Activated CD4-positive, alpha-beta T cell treated with anti-CD3 and anti-CD28 coated beads for 36 hours (primary cell): ENCODE measurements at regions of chr17 and their contacts with region 1.

Region 1: GRCh38 chr17:49707608-49708514 is at the start of gene SLC35B1:
- DNase-seq: peak; percentile 100
- ATAC-seq: peak; percentile 97
- H3K4me3 Mint-ChIP-seq: peak within 1 kb of the TSS; percentile 93
- H3K27ac Mint-ChIP-seq: peak within 1 kb of the TSS; percentile 97
- H3K4me1 Mint-ChIP-seq: peaks cover 39% of the 10 kb centered on the region
- H3K27me3 Mint-ChIP-seq: no peaks in the 10 kb centered on the region
- total RNA-seq, gene SLC35B1: 43.9 to 59.4 TPM

Region 2: DNA sequence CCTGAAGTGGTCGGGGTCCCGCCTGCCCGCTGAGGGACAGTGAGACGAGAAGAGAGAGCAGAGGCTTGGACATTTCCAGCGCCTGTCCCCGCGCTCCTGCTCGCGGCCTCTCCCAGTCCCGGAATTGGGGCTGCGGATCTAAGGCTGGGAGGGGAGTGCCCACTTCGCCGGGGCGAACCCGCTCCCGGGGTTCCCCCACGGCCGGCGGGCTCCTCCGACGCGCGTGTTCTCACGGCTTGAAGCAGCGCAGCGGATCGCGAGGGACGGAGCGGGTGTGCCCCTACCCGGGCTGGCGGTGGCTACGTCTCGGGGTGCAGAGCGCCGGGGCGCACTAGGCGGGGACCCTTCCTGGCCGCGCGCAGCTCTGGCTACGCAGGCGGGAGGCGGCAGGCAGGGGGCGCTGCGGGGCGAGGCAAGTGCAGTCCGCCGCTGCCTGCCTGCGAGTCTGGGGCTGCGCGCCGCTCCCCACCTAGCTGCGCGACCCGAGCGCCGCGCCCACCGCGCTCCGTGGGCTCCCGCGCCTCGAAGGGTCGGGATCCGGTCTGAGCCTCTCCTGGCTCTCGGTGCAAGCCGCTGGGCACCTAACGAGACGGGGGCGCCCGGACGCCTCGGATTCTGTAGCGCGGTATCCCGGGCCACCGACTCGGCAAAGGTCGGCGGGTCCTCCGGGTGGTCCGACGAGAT is 211.5 kb before region 1 on chr17:
- CTCF ChIA-PET with region 1: no interaction called
- POLR2A ChIA-PET with region 1: no interaction called
- intact Hi-C with region 1: loop called in 1 of 2 experiments (anchors 5 kb)
- DNase-seq: peak; percentile 92
- ATAC-seq: peak; percentile 85
- H3K4me3 Mint-ChIP-seq: peak overlapping the region; percentile 63
- H3K27ac Mint-ChIP-seq: no peak overlapping the region
- H3K4me1 Mint-ChIP-seq: peaks cover 16% of the 10 kb centered on the region
- H3K27me3 Mint-ChIP-seq: peaks cover 51% of the 10 kb centered on the region

Region 3: DNA sequence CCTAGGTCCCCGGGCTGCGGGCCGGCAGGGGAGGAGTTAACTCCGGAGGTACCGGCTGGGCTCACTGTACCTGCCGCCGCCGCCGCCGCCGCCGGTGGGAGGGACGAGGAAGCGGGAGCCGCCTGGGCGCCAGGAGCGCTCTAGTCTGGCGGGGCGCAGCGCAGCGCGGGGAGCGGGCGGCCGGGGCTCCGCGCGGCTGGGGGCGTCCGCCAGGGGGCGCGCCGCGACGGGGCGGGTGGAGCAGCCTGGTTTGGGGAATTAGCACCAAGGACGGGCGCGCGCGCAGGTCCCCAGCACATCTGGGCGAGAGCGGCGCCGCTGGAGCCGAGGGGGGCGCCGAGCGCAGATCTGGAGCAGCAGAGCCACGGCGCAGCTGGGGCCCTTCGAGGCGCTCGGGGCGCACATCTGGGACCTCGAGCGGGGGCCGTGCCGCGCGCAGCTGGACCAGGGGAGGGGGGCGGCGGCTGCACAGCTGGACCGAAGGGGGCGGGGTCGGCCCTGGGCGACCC is 132.2 kb before region 1 on chr17 and contains the start of gene NXPH3:
- CTCF ChIA-PET with region 1: interaction called, 458 read pairs
- POLR2A ChIA-PET with region 1: no interaction called
- intact Hi-C with region 1: loop called in 1 of 2 experiments (anchors 1 kb)
- DNase-seq: peak; percentile 86
- ATAC-seq: peak; percentile 87
- H3K4me3 Mint-ChIP-seq: peak within 1 kb of the TSS; percentile 61
- H3K27ac Mint-ChIP-seq: no peak within 1 kb of the TSS
- H3K4me1 Mint-ChIP-seq: peaks cover 3% of the 10 kb centered on the region
- H3K27me3 Mint-ChIP-seq: peaks cover 40% of the 10 kb centered on the region
- total RNA-seq, gene NXPH3: 0.09 TPM

Region 4: GRCh38 chr17:49656247-49656646 is 51.6 kb before region 1 on chr17:
- CTCF ChIA-PET with region 1: no interaction called
- POLR2A ChIA-PET with region 1: no interaction called
- intact Hi-C with region 1: no loop called
- DNase-seq: no peak
- ATAC-seq: no peak
- H3K4me3 Mint-ChIP-seq: no peak overlapping the region
- H3K27ac Mint-ChIP-seq: no peak overlapping the region
- H3K4me1 Mint-ChIP-seq: peaks cover 56% of the 10 kb centered on the region
- H3K27me3 Mint-ChIP-seq: no peaks in the 10 kb centered on the region

Region 5: DNA sequence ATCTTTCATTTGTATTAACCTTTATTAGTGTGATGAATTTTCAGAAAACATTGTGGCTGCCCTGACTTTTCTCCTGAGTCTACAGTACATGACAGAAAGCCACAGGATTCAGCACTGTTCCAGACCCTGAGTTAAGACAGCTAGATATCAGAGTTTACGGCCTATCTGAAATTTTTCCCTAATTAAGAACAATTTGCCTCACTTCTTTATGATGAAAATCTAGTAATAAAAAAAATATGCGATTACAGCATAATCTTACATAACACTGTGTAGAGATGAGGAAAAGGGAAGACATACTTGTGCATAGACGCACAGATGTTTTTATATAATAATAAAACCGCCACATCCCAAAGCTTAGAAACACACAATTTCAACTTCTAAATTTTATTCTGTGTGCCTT is 37.2 kb before region 1 on chr17:
- CTCF ChIA-PET with region 1: no interaction called
- POLR2A ChIA-PET with region 1: no interaction called
- intact Hi-C with region 1: no loop called
- DNase-seq: no peak
- ATAC-seq: no peak
- H3K4me3 Mint-ChIP-seq: no peak overlapping the region
- H3K27ac Mint-ChIP-seq: no peak overlapping the region
- H3K4me1 Mint-ChIP-seq: peaks cover 58% of the 10 kb centered on the region
- H3K27me3 Mint-ChIP-seq: no peaks in the 10 kb centered on the region

Region 6: GRCh38 chr17:49730078-49730784 is 22.4 kb after region 1 on chr17:
- CTCF ChIA-PET with region 1: interaction called, 15 read pairs
- POLR2A ChIA-PET with region 1: no interaction called
- intact Hi-C with region 1: no loop called
- DNase-seq: no peak
- ATAC-seq: no peak
- H3K4me3 Mint-ChIP-seq: no peak overlapping the region
- H3K27ac Mint-ChIP-seq: no peak overlapping the region
- H3K4me1 Mint-ChIP-seq: peaks cover 51% of the 10 kb centered on the region
- H3K27me3 Mint-ChIP-seq: no peaks in the 10 kb centered on the region

Region 7: GRCh38 chr17:49763735-49764558 is 56.1 kb after region 1 on chr17 and contains the start of gene FAM117A:
- CTCF ChIA-PET with region 1: interaction called, 34 read pairs
- POLR2A ChIA-PET with region 1: interaction called, 22 read pairs
- intact Hi-C with region 1: loop called (anchors 1 kb)
- DNase-seq: peak; percentile 98
- ATAC-seq: peak; percentile 97
- H3K4me3 Mint-ChIP-seq: peak within 1 kb of the TSS; percentile 89
- H3K27ac Mint-ChIP-seq: peak within 1 kb of the TSS; percentile 88
- H3K4me1 Mint-ChIP-seq: peaks cover 52% of the 10 kb centered on the region
- H3K27me3 Mint-ChIP-seq: no peaks in the 10 kb centered on the region
- total RNA-seq, gene FAM117A: 14.1 to 15.4 TPM

Region 8: DNA sequence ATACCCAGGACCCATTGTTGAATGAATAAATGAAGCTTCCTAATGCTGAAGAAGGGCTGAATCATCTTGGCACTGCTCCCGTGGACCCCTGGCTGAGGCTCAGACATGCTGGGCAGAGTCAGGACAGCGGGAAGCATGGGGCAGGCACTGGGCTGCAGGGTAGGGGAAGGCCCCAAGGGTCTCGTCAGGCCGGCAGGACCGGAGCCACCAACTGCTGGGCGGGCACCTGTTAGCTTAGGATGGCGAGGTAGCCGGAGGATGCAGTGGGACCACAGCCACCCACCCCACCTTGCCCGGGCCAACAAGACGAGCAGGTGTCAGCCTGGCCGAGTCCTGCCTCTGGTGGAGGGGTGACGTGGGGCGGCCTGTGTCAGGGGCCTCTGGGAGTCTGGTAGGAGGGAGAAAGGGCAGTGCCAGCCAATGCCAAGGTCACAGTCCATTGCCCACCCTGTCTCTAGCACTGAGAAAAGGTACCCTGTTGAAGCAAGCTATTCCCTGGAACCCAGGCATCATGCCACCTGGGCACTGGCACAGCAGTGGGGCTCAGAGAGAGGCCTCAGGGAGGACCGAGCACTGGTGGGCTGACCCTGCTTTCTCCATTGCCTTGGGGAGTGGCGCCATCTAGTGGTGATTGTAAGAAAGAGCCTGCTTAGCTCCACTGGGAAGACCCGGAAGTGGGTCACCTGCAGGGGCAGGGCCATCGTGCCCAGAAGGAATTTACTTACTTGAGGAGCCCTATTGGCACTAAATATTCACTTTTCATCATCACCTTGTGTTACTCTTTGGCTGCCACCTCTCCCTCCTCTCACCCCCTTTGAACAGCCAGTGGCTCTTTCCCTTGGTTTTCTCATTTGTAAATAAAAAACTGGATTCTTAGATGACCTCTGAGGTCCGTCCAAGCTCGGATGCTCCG is 290.2 kb after region 1 on chr17:
- CTCF ChIA-PET with region 1: interaction called, 3 read pairs
- POLR2A ChIA-PET with region 1: no interaction called
- intact Hi-C with region 1: loop called (anchors 5 to 10 kb)
- DNase-seq: peak; percentile 92
- ATAC-seq: peak; percentile 86
- H3K4me3 Mint-ChIP-seq: no peak overlapping the region
- H3K27ac Mint-ChIP-seq: no peak overlapping the region
- H3K4me1 Mint-ChIP-seq: peaks cover 23% of the 10 kb centered on the region
- H3K27me3 Mint-ChIP-seq: peaks cover 56% of the 10 kb centered on the region